ENCODE measurements at regions of chr5 and their contacts with region 1.

Region 1: DNA sequence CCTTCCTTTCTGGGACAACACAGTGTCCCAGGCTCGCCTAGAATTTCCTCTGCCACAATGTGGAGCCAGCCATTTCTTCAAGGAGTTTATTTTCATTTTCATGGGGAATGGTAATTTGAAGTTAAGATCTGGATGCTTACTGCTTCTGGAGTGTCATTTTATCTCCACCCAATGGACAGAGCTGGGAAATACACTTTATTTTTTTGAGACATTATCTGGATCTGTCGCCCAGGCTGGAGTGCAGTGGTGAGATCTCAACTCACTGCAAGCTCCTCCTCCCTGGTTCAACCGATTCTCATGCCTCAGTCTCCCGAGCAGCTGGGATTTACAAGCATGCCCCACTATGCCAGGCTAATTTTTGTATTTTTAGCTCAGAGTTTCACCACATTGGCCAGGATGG is 12.7 kb upstream of the THG1L start:
- DNase-seq: no peak
- H3K4me3 Mint-ChIP-seq: no peak overlapping the region
- H3K27ac Mint-ChIP-seq: peak overlapping the region; percentile 67
- H3K4me1 Mint-ChIP-seq: peaks cover 33% of the 10 kb centered on the region
- H3K27me3 Mint-ChIP-seq: no peaks in the 10 kb centered on the region

Region 2: DNA sequence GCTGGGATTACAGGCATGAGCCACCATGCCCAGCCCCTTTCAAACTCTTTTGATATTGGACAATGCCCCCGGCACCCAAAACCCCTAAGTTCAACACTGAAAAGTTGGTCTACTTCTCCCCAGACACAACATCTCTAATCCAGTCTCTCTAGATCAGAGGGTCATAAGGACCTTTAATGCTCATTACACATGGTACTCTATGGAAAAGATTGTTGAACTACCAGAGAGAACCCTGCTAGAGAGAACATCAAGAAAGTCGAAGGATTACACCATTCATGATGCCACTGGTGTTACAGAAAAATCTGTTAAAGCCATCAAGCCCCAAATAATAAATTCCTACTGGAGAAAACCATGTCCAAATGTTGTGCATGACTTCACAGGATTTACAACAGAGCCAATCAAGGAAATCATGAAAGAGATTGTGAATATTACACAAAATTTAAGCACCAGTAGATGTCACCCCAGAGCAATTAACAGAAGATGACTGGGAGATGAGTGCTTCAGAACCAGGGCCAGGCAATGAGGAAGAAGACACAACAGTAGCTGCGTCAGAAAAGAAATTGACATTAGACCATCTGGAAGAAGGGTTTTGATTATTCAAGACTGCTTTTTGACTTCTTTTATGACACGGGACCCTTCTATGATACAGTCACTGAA is 286.8 kb before region 1 on chr5:
- intact Hi-C with region 1: loop called (anchors 1 kb)
- DNase-seq: peak; percentile 20
- H3K4me3 Mint-ChIP-seq: no peak overlapping the region
- H3K27ac Mint-ChIP-seq: no peak overlapping the region
- H3K4me1 Mint-ChIP-seq: peaks cover 12% of the 10 kb centered on the region
- H3K27me3 Mint-ChIP-seq: peaks cover 28% of the 10 kb centered on the region

Region 3: GRCh38 chr5:157516626-157517325 is 201.7 kb before region 1 on chr5:
- intact Hi-C with region 1: loop called (anchors 5 kb)
- DNase-seq: no peak
- H3K4me3 Mint-ChIP-seq: no peak overlapping the region
- H3K27ac Mint-ChIP-seq: peak overlapping the region; percentile 51
- H3K4me1 Mint-ChIP-seq: peaks cover 68% of the 10 kb centered on the region
- H3K27me3 Mint-ChIP-seq: no peaks in the 10 kb centered on the region

Region 4: GRCh38 chr5:157670662-157671591 is 47.6 kb before region 1 on chr5 and contains the start of gene C5orf52:
- intact Hi-C with region 1: loop called (anchors 2 kb)
- DNase-seq: no peak
- H3K4me3 Mint-ChIP-seq: peak within 1 kb of the TSS; percentile 90
- H3K27ac Mint-ChIP-seq: peak within 1 kb of the TSS; percentile 74
- H3K4me1 Mint-ChIP-seq: peaks cover 28% of the 10 kb centered on the region
- H3K27me3 Mint-ChIP-seq: peaks cover 8% of the 10 kb centered on the region
- total RNA-seq, gene C5orf52: 0.30 TPM in 1 of 2 replicates, not detected in the other

Region 5: GRCh38 chr5:157743163-157744050 is 24.9 kb after region 1 on chr5 and contains the start of gene LSM11:
- intact Hi-C with region 1: no loop called
- DNase-seq: peak; percentile 89
- H3K4me3 Mint-ChIP-seq: peak within 1 kb of the TSS; percentile 90
- H3K27ac Mint-ChIP-seq: peak within 1 kb of the TSS; percentile 82
- H3K4me1 Mint-ChIP-seq: peaks cover 35% of the 10 kb centered on the region
- H3K27me3 Mint-ChIP-seq: no peaks in the 10 kb centered on the region
- total RNA-seq, gene LSM11: 8.7 and 8.9 TPM in 2 replicates

Region 6: DNA sequence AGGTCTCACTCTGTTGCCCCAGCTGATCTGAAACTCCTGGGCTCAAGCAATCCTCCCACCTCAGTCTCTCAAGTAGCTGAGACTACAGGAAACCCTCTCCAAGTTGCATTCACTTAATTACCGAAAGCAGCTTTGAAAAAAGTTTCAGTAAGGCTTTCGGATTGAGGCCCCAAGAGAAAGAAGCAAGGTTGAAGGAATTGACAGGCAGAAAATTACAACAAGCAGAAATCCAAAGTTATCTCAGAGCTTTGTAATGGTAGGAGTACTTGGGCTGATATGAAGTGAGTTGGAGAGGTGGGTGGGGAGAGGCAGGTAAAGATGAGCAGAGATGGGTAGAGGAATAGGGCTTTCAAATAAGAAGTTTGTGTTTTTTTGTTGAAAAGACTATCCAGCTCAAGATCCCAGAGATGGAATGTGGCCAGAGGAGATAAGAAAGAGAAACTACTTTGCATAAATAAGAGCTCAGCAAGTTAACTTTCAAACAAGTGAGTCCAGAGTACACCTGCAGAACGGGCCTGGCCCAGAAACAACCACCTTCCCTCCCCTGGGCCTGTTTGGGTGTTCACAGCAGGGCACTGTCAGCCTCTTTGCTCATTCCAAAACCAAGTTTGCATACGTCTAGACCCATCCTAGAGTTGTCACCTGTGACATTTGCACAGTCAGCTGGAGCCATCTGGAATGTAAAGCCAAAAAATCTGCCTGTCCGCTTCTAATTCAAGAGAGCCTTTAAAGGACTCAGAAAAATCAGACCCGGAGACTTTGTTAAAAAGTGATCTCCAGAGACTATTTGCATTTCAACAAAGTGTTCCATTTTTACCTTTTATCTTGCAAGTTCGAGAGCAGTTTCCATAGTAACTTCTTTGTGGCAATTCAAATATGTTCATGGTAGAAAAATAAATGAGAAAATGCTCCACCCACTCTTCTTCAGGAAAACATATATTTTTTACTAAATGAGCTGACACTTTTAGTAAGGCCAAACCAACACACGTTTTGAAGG is 142.7 kb after region 1 on chr5:
- intact Hi-C with region 1: no loop called
- DNase-seq: no peak
- H3K4me3 Mint-ChIP-seq: peak overlapping the region; percentile 62
- H3K27ac Mint-ChIP-seq: peak overlapping the region; percentile 85
- H3K4me1 Mint-ChIP-seq: peaks cover 45% of the 10 kb centered on the region
- H3K27me3 Mint-ChIP-seq: no peaks in the 10 kb centered on the region

Measured in activated T-helper 2 cell treated with anti-CD3 and anti-CD28 coated beads, Interferon-gamma antibody, Interleukin-2, Interleukin-4, amounts not matched to agents 10 μg/mL and 5 μg/mL and 100 μg/mL, durations not matched to agents 14 hours and 24 hours and 36 hours (primary cell).